ENCODE measurements at regions of chr5 and their contacts with region 1.

Region 1: GRCh38 chr5:141701360-141702119 is 19.5 kb upstream of the ARAP3 start:
- DNase-seq: no peak
- H3K4me3 ChIP-seq: no peak overlapping the region
- CTCF ChIP-seq: no peak

Region 2: DNA sequence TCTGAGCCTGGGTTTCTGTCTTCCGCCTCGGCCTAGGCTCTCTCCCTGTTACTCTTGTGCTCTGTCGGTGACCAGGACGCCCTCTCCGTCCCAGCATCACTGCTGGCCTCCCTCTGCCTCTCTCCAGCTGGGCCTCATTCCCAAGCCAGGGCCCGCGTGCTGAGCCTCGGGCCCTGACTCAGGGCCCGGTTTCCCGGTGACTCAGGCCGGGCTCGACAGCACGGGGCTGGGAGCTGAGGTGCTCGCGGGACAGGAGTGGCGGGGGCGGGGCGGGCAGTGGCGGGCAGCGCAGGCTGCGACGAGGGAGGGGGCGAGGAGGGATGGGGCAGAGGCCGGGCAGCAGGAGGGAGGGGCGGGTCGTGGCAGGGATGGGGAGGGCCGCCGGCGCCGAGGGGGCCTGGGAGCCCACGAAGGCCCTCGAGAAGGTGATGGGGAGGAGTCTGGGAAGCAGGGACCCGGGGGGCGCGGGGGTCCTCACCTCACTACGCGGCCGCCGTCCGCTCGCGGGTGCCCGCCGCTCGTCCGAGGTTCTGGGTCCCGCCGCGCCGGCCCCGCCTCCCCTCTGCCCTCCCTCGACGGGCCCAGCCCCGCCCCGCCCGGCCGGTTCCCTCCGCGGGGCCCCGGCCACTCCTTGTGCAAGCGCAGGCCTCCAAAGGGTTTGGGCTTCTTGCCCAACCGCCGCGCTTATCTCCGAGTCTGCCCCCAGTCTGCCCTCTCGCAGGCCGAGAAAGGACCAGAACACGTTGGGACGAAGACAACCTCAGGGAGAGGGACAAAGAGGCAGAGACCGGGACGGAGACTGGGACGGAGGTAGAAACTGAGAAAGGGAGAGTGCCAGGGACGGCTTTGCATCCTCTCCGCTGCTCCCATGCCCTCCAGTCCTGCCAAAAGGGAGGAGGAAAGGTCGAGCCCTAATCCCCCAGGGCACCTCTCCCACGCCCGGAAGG is 19.6 kb before region 1 on chr5 and contains the start of gene ARAP3:
- CTCF ChIA-PET with region 1: interaction called, 14 read pairs
- POLR2A ChIA-PET with region 1: no interaction called
- DNase-seq: peak; percentile 37
- H3K4me3 ChIP-seq: peak within 1 kb of the TSS; percentile 58
- CTCF ChIP-seq: no peak

Region 3: DNA sequence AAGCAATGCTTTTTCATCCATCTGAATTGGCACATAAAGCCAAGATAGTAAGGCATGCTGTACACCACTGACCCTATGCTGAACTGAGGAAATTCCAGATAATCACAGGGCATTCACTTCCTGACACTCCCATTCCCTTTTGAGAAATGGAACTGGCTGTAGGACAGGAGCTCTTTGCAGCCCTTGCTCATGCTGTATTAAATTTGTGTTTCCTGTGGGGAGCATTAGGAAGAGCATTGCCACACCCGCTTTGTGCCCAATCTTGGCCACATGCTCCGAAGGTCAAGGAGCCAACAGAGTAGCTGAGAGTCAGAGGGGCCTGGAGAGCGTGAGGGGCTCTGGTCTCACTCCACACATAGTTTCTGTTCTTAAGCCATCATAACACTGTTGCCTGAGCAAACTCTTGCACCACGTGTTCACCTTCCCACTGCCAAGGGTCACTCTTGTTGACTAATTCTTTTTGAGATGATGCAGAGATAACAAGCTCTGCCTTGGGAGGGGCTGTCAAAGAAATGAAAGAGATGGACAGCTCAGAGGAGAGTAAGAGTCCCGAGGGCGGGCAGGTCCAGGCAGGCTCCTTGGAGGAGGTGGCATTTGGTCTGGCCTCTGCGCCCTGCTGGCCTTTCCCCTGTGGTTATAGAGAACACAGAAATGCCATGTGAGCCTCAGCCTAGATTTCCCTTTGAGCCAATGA is 12.2 kb after region 1 on chr5:
- CTCF ChIA-PET with region 1: interaction called, 70 read pairs
- POLR2A ChIA-PET with region 1: no interaction called
- DNase-seq: no peak
- H3K4me3 ChIP-seq: no peak overlapping the region
- CTCF ChIP-seq: no peak

Region 4: GRCh38 chr5:141825791-141826560 is 124.4 kb after region 1 on chr5:
- CTCF ChIA-PET with region 1: interaction called, 17 read pairs
- POLR2A ChIA-PET with region 1: no interaction called
- DNase-seq: no peak
- H3K4me3 ChIP-seq: no peak overlapping the region
- CTCF ChIP-seq: no peak

Region 5: GRCh38 chr5:141940695-141941271 is 239.2 kb after region 1 on chr5:
- CTCF ChIA-PET with region 1: interaction called, 13 read pairs
- POLR2A ChIA-PET with region 1: no interaction called
- DNase-seq: no peak
- H3K4me3 ChIP-seq: no peak overlapping the region
- CTCF ChIP-seq: no peak